Activated naive CD4-positive, alpha-beta T cell treated with anti-CD3 and anti-CD28 coated beads for 36 hours (primary cell): ENCODE measurements at regions of chrX and their contacts with region 1.

Region 1: GRCh38 chrX:39578354-39578869 is 519.3 kb downstream of the BCOR start:
- DNase-seq: peak; percentile 84
- H3K4me3 Mint-ChIP-seq: peak overlapping the region; percentile 29
- H3K27ac Mint-ChIP-seq: peak overlapping the region; percentile 89
- H3K4me1 Mint-ChIP-seq: peaks cover 23% of the 10 kb centered on the region
- H3K27me3 Mint-ChIP-seq: no peaks in the 10 kb centered on the region

Region 2: DNA sequence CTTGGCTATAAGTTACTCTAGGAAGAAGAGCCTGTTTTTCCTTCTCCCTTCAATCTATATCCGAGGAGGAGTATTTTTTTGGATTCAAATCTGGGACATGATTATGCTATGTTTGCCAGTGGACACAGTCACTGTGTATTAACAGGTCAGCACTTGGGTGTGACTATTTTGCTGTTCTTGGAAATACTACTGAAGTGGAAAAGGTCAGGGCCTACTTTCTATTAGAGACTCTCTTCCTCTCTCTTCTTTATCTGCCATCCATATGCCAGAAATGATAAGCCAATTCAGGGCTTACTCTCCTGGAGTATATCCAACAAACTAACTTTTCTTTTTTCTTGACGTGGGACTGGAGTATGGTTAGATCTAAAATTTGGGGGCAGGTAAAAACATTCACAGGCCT is 736.7 kb before region 1 on chrX:
- CTCF ChIA-PET with region 1: no interaction called
- intact Hi-C with region 1: no loop called
- DNase-seq: no peak
- H3K4me3 Mint-ChIP-seq: no peak overlapping the region
- H3K27ac Mint-ChIP-seq: no peak overlapping the region
- H3K4me1 Mint-ChIP-seq: peaks cover 16% of the 10 kb centered on the region
- H3K27me3 Mint-ChIP-seq: no peaks in the 10 kb centered on the region

Region 3: DNA sequence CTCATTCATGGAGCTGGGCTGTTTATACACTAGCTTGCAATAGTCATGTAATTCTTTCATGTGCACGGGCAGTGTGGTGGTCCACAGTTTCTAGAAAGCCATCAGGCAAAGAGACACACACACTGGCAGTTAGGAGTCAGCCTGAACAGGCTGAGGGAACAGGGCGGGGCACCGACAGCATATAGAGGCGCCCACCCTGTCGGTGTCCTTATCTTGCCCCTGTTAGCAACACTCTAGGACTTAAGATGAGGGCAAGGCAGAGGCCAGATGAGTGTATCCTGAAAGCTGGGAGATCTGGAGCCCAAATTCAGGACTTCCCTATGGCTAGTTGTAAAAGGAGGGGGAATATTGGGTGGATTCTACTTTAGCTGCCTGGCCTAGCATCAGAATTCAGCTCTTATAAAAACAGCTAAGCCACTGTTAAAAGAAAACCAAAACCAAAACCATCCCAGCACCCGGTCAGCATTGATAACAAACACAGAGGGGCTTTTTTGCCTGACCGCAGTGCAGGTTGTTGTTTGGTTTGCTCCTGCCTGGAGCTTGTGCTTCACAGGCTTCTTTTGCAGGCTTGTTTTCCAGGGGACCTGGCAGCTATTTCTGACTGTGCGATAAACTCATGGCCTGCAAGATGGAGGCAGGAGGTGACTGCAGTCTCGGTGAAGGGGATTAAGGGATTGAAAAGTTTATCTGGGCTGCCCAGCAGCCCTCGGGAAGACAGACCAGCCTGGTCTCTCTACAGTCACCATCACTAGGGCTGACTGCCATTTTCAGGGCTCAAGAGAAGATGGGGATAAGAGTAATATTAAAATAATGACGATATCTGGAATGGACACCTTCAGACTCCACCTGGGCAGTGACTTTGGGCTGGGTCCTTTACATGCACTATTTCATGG is 138.3 kb before region 1 on chrX:
- CTCF ChIA-PET with region 1: no interaction called
- intact Hi-C with region 1: loop called (anchors 5 kb)
- DNase-seq: peak; percentile 44
- H3K4me3 Mint-ChIP-seq: peak overlapping the region; percentile 42
- H3K27ac Mint-ChIP-seq: peak overlapping the region; percentile 86
- H3K4me1 Mint-ChIP-seq: peaks cover 29% of the 10 kb centered on the region
- H3K27me3 Mint-ChIP-seq: no peaks in the 10 kb centered on the region

Region 4: GRCh38 chrX:39491548-39492297 is 86.7 kb before region 1 on chrX:
- CTCF ChIA-PET with region 1: no interaction called
- intact Hi-C with region 1: loop called (anchors 1 kb)
- DNase-seq: peak; percentile 76
- H3K4me3 Mint-ChIP-seq: peak overlapping the region; percentile 21
- H3K27ac Mint-ChIP-seq: peak overlapping the region; percentile 76
- H3K4me1 Mint-ChIP-seq: peaks cover 53% of the 10 kb centered on the region
- H3K27me3 Mint-ChIP-seq: no peaks in the 10 kb centered on the region

Region 5: GRCh38 chrX:39508300-39508692 is 70.1 kb before region 1 on chrX:
- CTCF ChIA-PET with region 1: no interaction called
- intact Hi-C with region 1: loop called (anchors 2 kb)
- DNase-seq: peak; percentile 52
- H3K4me3 Mint-ChIP-seq: no peak overlapping the region
- H3K27ac Mint-ChIP-seq: no peak overlapping the region
- H3K4me1 Mint-ChIP-seq: peaks cover 24% of the 10 kb centered on the region
- H3K27me3 Mint-ChIP-seq: no peaks in the 10 kb centered on the region

Region 6: DNA sequence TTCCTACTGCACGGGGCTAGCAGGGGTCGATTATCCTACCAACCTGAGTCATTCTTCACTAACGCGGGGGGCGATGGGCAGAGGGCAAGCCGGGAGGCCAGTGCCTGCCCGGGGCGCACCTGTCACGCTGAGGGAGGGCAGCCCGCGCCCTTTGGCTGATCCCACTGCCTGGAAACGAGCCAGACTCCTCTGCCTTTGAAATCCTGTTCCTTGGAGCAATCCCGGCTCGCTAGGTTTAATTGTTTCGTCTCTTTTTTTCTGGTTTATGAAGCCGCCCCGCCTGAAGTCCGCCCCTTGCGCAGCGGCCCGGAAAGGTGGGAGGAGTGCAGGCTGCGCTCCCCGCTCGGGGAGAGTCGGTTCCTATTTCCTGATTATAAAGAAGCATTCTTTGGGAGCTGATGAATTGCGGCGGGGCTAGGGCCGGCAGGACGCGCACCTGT is 35.1 kb after region 1 on chrX:
- CTCF ChIA-PET with region 1: no interaction called
- intact Hi-C with region 1: loop called (anchors 1 kb)
- DNase-seq: peak; percentile 29
- H3K4me3 Mint-ChIP-seq: peak overlapping the region; percentile 70
- H3K27ac Mint-ChIP-seq: peak overlapping the region; percentile 87
- H3K4me1 Mint-ChIP-seq: peaks cover 22% of the 10 kb centered on the region
- H3K27me3 Mint-ChIP-seq: no peaks in the 10 kb centered on the region